ENCODE measurements at regions of chr19 and their contacts with region 1.

Region 1: GRCh38 chr19:3987619-3988371 is 2.5 kb upstream of the EEF2 start:
- DNase-seq: peak; percentile 78 to 96 (median 87)
- ATAC-seq: peak; percentile 29 to 50 (median 31)
- H3K4me3 ChIP-seq: peak overlapping the region; percentile 89 to 90
- H3K4me3 Mint-ChIP-seq: peak overlapping the region; percentile 75 to 95 (median 92)
- H3K27ac ChIP-seq: peak overlapping the region; percentile 52
- H3K27ac Mint-ChIP-seq: peak overlapping the region; percentile 82 to 85
- H3K4me1 ChIP-seq: peaks cover 26 to 52% of the 10 kb centered on the region in 2 experiments
- H3K4me1 Mint-ChIP-seq: peaks cover 48 to 52% (median 49%) of the 10 kb centered on the region in 3 donors
- H3K27me3 ChIP-seq: no peaks in the 10 kb centered on the region
- H3K27me3 Mint-ChIP-seq: no peaks in the 10 kb centered on the region

Region 2: GRCh38 chr19:3762501-3763459 is 225.0 kb before region 1 on chr19 and contains the start of gene MRPL54:
- CTCF ChIA-PET with region 1: interaction called in 1 of 2 experiments, 21 read pairs
- POLR2A ChIA-PET with region 1: interaction called in 1 of 2 experiments, 4 read pairs
- DNase-seq: peak; percentile 98 to 100 (median 99)
- ATAC-seq: peak; percentile 86 to 87 (median 87)
- H3K4me3 ChIP-seq: peak within 1 kb of the TSS; percentile 85 to 98
- H3K4me3 Mint-ChIP-seq: peak within 1 kb of the TSS; percentile 97 to 98 (median 97)
- H3K27ac ChIP-seq: peak within 1 kb of the TSS; percentile 98
- H3K27ac Mint-ChIP-seq: peak within 1 kb of the TSS; percentile 100
- H3K4me1 ChIP-seq: peaks cover 15 to 70% of the 10 kb centered on the region in 2 experiments
- H3K4me1 Mint-ChIP-seq: peaks cover 45 to 57% (median 50%) of the 10 kb centered on the region in 3 donors
- H3K27me3 ChIP-seq: no peaks in the 10 kb centered on the region
- H3K27me3 Mint-ChIP-seq: no peaks in the 10 kb centered on the region
- total RNA-seq, gene MRPL54: 46.9 to 77.8 (median 52.2) TPM

Region 3: DNA sequence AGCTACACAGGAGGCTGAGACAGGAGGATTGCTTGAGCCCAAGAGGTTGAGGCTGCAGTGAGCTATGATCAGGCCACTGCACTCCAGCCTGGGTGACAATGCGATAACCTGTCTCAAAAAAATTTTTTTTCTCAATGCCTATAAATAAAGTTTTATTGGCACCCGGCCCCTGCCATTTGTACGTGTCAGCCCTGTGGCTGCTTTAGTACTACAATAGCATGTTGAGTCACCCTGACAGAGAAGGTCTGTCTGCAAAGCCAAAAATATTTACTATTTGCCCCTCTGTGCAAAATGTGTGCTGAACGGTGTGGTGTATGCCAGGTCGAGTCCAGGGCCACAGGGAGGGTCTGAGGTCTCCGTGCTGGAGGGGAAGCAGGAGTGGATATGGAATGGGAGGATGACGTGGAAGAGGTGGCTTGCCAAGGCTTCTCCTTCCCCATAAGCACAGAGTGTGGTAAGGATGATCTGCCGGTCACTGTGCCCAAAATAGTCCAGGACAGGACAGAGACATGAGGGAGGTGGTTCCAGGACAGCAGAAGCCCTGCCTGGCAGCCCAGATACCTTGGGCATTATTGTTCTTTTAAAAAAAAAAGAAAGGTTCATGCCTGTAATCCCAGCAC is 44.9 kb before region 1 on chr19:
- CTCF ChIA-PET with region 1: no interaction called
- POLR2A ChIA-PET with region 1: no interaction called
- DNase-seq: no peak
- ATAC-seq: no peak
- H3K4me3 ChIP-seq: no peak overlapping the region
- H3K4me3 Mint-ChIP-seq: no peak overlapping the region
- H3K27ac ChIP-seq: no peak overlapping the region
- H3K27ac Mint-ChIP-seq: no peak overlapping the region
- H3K4me1 ChIP-seq: no peaks in the 10 kb centered on the region
- H3K4me1 Mint-ChIP-seq: peaks cover 0 to 2% (median 0%) of the 10 kb centered on the region in 3 donors
- H3K27me3 ChIP-seq: peaks cover 0 to 17% of the 10 kb centered on the region in 2 experiments
- H3K27me3 Mint-ChIP-seq: no peaks in the 10 kb centered on the region

Region 4: GRCh38 chr19:3958808-3959707 is 28.7 kb before region 1 on chr19:
- CTCF ChIA-PET with region 1: no interaction called
- POLR2A ChIA-PET with region 1: interaction called in 1 of 2 experiments, 13 read pairs
- DNase-seq: no peak
- ATAC-seq: no peak
- H3K4me3 ChIP-seq: no peak overlapping the region
- H3K4me3 Mint-ChIP-seq: no peak overlapping the region
- H3K27ac ChIP-seq: no peak overlapping the region
- H3K27ac Mint-ChIP-seq: no peak overlapping the region
- H3K4me1 ChIP-seq: no peaks in the 10 kb centered on the region
- H3K4me1 Mint-ChIP-seq: no peaks in the 10 kb centered on the region
- H3K27me3 ChIP-seq: no peaks in the 10 kb centered on the region
- H3K27me3 Mint-ChIP-seq: no peaks in the 10 kb centered on the region

Region 5: DNA sequence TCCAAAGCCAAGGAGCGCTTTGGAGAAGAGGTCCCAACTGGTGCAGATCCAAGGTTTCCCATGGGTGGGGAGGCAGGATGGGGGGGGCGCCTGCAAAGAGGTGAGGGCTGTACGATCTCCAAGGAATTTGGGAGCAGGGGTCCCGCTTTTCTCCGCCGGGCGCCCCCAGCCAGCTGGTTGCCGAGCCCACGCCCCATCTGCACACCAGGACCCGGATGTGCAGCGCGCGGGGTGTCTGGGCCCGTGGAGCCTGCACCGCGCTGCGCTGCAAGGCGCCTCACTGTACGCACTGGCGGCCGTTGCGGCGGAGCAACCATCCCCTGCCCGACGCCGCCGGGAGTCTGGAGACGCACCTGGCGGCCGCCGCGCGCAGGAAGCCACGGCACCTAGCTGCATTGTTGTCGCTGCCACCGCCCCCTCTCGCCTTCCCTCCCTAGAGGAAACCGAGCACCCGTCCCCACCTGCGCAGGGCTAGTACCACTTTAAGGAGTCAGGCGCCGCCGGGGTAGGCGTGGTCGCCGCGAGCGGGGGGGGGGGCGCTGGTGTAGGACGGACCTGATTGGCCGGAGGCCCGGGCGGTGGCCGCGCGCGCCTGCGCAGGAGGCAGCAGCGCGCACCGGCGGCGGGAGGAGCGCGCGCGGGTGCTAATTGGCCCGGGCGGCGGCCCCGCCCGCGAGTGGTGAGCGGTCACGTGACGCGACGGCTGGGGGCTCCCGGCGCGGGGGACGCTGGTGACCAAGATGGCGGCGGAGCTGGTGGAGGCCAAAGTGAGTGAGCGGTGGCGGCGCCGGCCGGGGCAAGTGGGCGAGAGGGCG is 19.4 kb after region 1 on chr19 and contains the start of gene PIAS4:
- CTCF ChIA-PET with region 1: interaction called, 4 to 19 read pairs
- POLR2A ChIA-PET with region 1: interaction called, 3 to 9 read pairs
- DNase-seq: peak; percentile 91 to 98 (median 95)
- ATAC-seq: peak; percentile 89 to 94 (median 90)
- H3K4me3 ChIP-seq: peak within 1 kb of the TSS; percentile 60 to 80
- H3K4me3 Mint-ChIP-seq: peak within 1 kb of the TSS; percentile 78 to 83 (median 82)
- H3K27ac ChIP-seq: peak within 1 kb of the TSS; percentile 34
- H3K27ac Mint-ChIP-seq: peak within 1 kb of the TSS; percentile 59 to 83
- H3K4me1 ChIP-seq: peaks cover 6 to 48% of the 10 kb centered on the region in 2 experiments
- H3K4me1 Mint-ChIP-seq: peaks cover 23 to 34% (median 33%) of the 10 kb centered on the region in 3 donors
- H3K27me3 ChIP-seq: no peaks in the 10 kb centered on the region
- H3K27me3 Mint-ChIP-seq: no peaks in the 10 kb centered on the region
- total RNA-seq, gene PIAS4: 21.8 to 42.6 (median 31.4) TPM

Region 6: DNA sequence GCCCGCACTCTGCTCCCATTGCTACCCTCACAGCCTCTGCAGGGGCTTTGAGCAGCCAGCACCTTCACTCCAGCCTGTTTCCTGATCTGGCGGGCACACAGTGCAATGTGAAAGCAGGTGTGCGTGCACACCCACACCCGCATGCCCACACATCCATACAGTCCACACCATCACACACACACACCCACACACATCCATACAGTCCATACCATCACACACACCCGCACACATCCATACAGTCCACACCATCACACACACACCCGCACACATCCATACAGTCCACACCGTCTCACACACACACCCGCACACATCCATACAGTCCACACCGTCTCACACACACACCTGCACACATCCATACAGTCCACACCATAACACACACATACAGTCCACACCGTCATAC is 47.8 kb after region 1 on chr19:
- CTCF ChIA-PET with region 1: no interaction called
- POLR2A ChIA-PET with region 1: no interaction called
- DNase-seq: no peak
- ATAC-seq: peak in 2 of 4 experiments; percentile 10 to 15
- H3K4me3 ChIP-seq: no peak overlapping the region
- H3K4me3 Mint-ChIP-seq: no peak overlapping the region
- H3K27ac ChIP-seq: no peak overlapping the region
- H3K27ac Mint-ChIP-seq: no peak overlapping the region
- H3K4me1 ChIP-seq: no peaks in the 10 kb centered on the region
- H3K4me1 Mint-ChIP-seq: no peaks in the 10 kb centered on the region
- H3K27me3 ChIP-seq: no peaks in the 10 kb centered on the region
- H3K27me3 Mint-ChIP-seq: no peaks in the 10 kb centered on the region

Region 7: GRCh38 chr19:4108767-4109625 is 121.2 kb after region 1 on chr19:
- CTCF ChIA-PET with region 1: interaction called, 10 read pairs
- POLR2A ChIA-PET with region 1: interaction called in 1 of 2 experiments, 3 read pairs
- DNase-seq: peak; percentile 59 to 89 (median 79)
- ATAC-seq: peak; percentile 62 to 68 (median 67)
- H3K4me3 ChIP-seq: peak overlapping the region; percentile 18 to 19
- H3K4me3 Mint-ChIP-seq: peak overlapping the region; percentile 39 to 71 (median 54)
- H3K27ac ChIP-seq: peak overlapping the region; percentile 86
- H3K27ac Mint-ChIP-seq: peak overlapping the region; percentile 93
- H3K4me1 ChIP-seq: peaks cover 11 to 84% of the 10 kb centered on the region in 2 experiments
- H3K4me1 Mint-ChIP-seq: peaks cover 55 to 79% (median 67%) of the 10 kb centered on the region in 3 donors
- H3K27me3 ChIP-seq: no peaks in the 10 kb centered on the region
- H3K27me3 Mint-ChIP-seq: no peaks in the 10 kb centered on the region

Region 8: GRCh38 chr19:4457654-4458395 is 470.0 kb after region 1 on chr19 and contains the start of gene UBXN6:
- CTCF ChIA-PET with region 1: interaction called in 1 of 2 experiments, 13 read pairs
- POLR2A ChIA-PET with region 1: no interaction called
- DNase-seq: peak; percentile 94 to 99 (median 98)
- ATAC-seq: peak; percentile 93 to 95 (median 94)
- H3K4me3 ChIP-seq: peak within 1 kb of the TSS; percentile 71 to 80
- H3K4me3 Mint-ChIP-seq: peak within 1 kb of the TSS; percentile 86 to 89 (median 87)
- H3K27ac ChIP-seq: peak within 1 kb of the TSS; percentile 60
- H3K27ac Mint-ChIP-seq: peak within 1 kb of the TSS; percentile 86 to 87
- H3K4me1 ChIP-seq: peaks cover 2 to 25% of the 10 kb centered on the region in 2 experiments
- H3K4me1 Mint-ChIP-seq: peaks cover 14 to 26% (median 19%) of the 10 kb centered on the region in 3 donors
- H3K27me3 ChIP-seq: no peaks in the 10 kb centered on the region
- H3K27me3 Mint-ChIP-seq: no peaks in the 10 kb centered on the region
- total RNA-seq, gene UBXN6: 49.7 to 86.4 (median 76.5) TPM